Endothelial cell of umbilical vein (primary cell): ENCODE measurements at regions of chr10 and their contacts with region 1.

Region 1: DNA sequence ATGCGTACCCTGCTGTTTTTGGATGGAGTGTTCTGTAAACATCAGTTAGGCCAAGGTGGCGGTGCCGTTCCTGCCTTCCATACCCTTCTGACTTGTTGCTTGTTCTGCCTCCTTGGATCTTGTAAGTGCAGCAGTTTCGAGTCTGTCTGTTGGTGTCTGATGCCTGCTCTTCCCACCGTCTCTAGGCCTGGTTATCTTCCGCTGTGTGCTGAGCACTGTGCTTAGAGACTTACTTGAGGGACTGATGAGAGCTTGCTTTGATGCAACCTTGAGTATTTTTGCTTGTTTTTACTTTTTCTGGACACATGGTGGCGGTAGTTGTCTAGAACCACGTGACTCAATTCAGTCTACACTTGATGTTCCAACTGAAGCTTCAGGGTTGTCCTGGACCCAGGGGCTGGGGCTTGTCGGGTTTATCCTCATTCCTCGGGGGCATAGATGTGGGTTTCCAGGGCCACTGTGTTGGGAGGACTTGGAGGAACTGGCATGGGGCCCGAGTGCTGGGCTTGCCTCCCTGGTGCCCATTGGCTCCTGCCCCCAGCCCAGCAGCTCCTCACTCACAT is 14.4 kb upstream of the SPRN start:
- DNase-seq: peak; percentile 19
- H3K4me3 ChIP-seq: no peak overlapping the region
- H3K27ac ChIP-seq: no peak overlapping the region
- H3K4me1 ChIP-seq: no peaks in the 10 kb centered on the region
- H3K27me3 ChIP-seq: no peaks in the 10 kb centered on the region
- CTCF ChIP-seq: peak; percentile 13 to 15
- POLR2A ChIP-seq: no peak

Region 2: DNA sequence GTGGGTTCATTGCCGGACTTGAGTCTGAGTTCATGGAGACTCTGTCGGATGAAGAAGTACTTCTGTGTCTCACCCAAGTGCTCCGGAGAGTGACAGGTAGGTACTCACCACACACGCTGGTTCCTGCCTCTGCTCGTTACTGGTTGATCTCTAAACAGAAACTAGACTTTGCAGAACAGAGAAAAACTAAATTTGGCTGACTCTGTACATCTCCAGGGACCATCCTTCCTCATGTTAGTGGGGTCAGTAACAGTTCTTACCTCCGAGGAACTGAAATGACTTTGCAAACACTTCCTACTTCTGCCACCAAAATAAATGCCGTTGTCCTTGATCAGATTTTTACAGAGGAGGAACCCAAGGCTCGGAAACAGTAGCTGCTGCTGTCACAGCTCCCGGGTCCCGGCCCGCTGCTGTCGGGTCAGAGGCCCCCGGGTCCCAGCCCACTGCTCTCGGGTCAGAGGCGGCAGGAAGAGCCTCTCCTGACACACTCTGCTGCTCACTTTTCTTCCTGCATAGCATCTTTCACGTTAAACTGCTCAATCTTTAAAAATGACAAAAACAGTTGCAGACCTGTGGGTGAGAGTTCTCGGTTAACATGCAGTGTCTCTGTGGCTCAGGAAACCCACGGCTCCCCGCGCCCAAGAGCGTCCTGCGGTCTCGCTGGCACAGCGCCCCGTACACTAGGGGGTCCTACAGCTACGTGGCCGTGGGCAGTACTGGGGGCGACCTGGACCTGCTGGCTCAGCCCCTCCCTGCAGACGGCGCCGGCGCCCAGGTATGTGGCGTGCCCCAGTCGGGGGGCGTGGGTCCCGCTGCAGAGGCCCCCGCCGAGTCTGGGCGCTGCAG is 49.6 kb before region 1 on chr10:
- CTCF ChIA-PET with region 1: no interaction called
- POLR2A ChIA-PET with region 1: no interaction called
- dilution Hi-C with region 1: no loop called
- intact Hi-C with region 1: no loop called
- DNase-seq: no peak
- H3K4me3 ChIP-seq: no peak overlapping the region
- H3K27ac ChIP-seq: no peak overlapping the region
- H3K4me1 ChIP-seq: peaks cover 7% of the 10 kb centered on the region
- H3K27me3 ChIP-seq: no peaks in the 10 kb centered on the region
- CTCF ChIP-seq: no peak
- POLR2A ChIP-seq: no peak

Region 3: GRCh38 chr10:133489816-133490588 is 51.2 kb after region 1 on chr10:
- CTCF ChIA-PET with region 1: interaction called, 8 read pairs
- POLR2A ChIA-PET with region 1: no interaction called
- dilution Hi-C with region 1: no loop called
- intact Hi-C with region 1: loop called (anchors 5 kb)
- DNase-seq: no peak
- H3K4me3 ChIP-seq: no peak overlapping the region
- H3K27ac ChIP-seq: no peak overlapping the region
- H3K4me1 ChIP-seq: no peaks in the 10 kb centered on the region
- H3K27me3 ChIP-seq: no peaks in the 10 kb centered on the region
- CTCF ChIP-seq: no peak
- POLR2A ChIP-seq: no peak

Region 4: GRCh38 chr10:133520155-133520738 is 81.5 kb after region 1 on chr10:
- CTCF ChIA-PET with region 1: interaction called, 6 read pairs
- POLR2A ChIA-PET with region 1: no interaction called
- dilution Hi-C with region 1: no loop called
- intact Hi-C with region 1: loop called (anchors 2 kb)
- DNase-seq: peak; percentile 47
- H3K4me3 ChIP-seq: peak overlapping the region in 2 of 3 experiments; percentile 18 to 37
- H3K27ac ChIP-seq: no peak overlapping the region
- H3K4me1 ChIP-seq: no peaks in the 10 kb centered on the region
- H3K27me3 ChIP-seq: peaks cover 0 to 5% of the 10 kb centered on the region in 2 experiments
- CTCF ChIP-seq: peak; percentile 82 to 93
- POLR2A ChIP-seq: no peak